ENCODE measurements at regions of chr9 and their contacts with region 1.

Region 1: GRCh38 chr9:102461156-102461819 is 533.8 kb upstream of the CYLC2 start:
- DNase-seq: no peak
- ATAC-seq: no peak
- H3K4me3 ChIP-seq: no peak overlapping the region
- H3K27ac ChIP-seq: no peak overlapping the region
- H3K4me1 ChIP-seq: no peaks in the 10 kb centered on the region
- H3K27me3 ChIP-seq: no peaks in the 10 kb centered on the region
- CTCF ChIP-seq: no peak

Region 2: GRCh38 chr9:102405218-102405867 is 55.9 kb before region 1 on chr9:
- intact Hi-C with region 1: loop called in 1 of 10 experiments (anchors 5 kb)
- DNase-seq: peak in 1 of 2 donors; percentile 16
- ATAC-seq: peak in 5 of 8 donors; percentile 70 to 97 (median 81)
- H3K4me3 ChIP-seq: no peak overlapping the region
- H3K27ac ChIP-seq: peak overlapping the region in 3 of 10 donors; percentile 39 to 53 (median 39)
- H3K4me1 ChIP-seq: no peaks in the 10 kb centered on the region
- H3K27me3 ChIP-seq: no peaks in the 10 kb centered on the region
- CTCF ChIP-seq: no peak

Region 3: GRCh38 chr9:102445181-102445747 is 16.0 kb before region 1 on chr9:
- intact Hi-C with region 1: loop called in 1 of 10 experiments (anchors 2 kb)
- DNase-seq: no peak
- ATAC-seq: no peak
- H3K4me3 ChIP-seq: no peak overlapping the region
- H3K27ac ChIP-seq: no peak overlapping the region
- H3K4me1 ChIP-seq: no peaks in the 10 kb centered on the region
- H3K27me3 ChIP-seq: no peaks in the 10 kb centered on the region
- CTCF ChIP-seq: no peak

Region 4: DNA sequence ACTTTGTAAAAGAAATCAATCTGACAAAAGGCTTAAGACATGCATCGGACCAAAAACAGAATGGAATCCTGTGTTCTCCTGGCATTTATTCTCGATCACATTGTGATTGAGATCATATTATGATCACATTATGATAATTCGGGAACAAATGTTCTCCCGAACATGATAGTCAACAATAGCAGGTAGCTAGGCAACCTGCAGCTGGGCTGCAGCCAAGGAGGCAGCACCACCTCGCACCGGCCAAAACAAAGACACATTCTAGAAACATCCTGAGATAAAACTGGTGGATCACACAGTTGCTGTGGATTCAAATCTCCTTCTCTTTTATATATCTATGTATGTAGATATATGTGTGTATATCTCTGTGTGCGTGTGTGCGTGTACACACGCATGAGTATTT is 53.3 kb after region 1 on chr9:
- intact Hi-C with region 1: no loop called
- DNase-seq: no peak
- ATAC-seq: no peak
- H3K4me3 ChIP-seq: no peak overlapping the region
- H3K27ac ChIP-seq: no peak overlapping the region
- H3K4me1 ChIP-seq: no peaks in the 10 kb centered on the region
- H3K27me3 ChIP-seq: no peaks in the 10 kb centered on the region
- CTCF ChIP-seq: no peak

Measured in heart right ventricle (tissue), 16 donors.